ENCODE measurements at regions of chr1 and their contacts with region 1.

Region 1: DNA sequence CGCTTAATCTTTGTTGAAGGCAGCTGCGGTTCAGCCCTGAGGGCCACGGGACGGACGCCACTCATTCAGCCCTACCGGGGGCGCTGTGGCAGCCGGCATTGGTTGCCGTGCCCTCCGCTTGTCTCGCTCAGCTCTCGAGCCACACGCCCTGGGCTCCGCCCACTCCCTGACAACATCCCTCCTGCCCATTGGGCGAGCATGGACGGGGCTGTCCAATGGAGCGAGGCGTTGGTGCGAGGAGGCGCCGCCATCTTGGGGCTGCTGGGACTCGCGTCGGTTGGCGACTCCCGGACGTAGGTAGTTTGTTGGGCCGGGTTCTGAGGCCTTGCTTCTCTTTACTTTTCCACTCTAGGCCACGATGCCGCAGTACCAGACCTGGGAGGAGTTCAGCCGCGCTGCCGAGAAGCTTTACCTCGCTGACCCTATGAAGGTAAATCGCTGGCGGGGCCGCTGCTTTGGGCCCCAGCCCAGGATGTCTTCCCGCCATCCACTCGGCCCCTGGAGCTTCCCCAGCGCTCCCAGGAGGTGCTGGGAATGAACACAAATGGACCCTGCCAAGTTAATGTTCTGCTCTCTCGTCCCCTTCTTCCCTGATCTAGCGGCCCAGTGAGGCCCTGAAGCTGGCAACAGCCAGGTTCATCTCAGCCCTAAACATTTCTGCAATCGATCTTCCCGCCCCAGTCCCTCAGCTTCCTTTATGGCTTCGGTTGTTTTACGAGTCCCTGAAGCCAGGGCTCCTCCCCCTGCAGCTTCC is at the start of gene SRP9:
- DNase-seq: peak; percentile 99
- ATAC-seq: peak; percentile 97
- H3K4me3 ChIP-seq: peak within 1 kb of the TSS; percentile 71 to 97 (median 92)
- H3K4me3 Mint-ChIP-seq: no peak within 1 kb of the TSS
- H3K27ac ChIP-seq: peak within 1 kb of the TSS; percentile 96 to 98
- H3K27ac Mint-ChIP-seq: no peak within 1 kb of the TSS
- H3K4me1 ChIP-seq: peaks cover 33 to 39% of the 10 kb centered on the region in 2 donors
- H3K4me1 Mint-ChIP-seq: peaks cover 21% of the 10 kb centered on the region
- H3K27me3 ChIP-seq: no peaks in the 10 kb centered on the region
- H3K27me3 Mint-ChIP-seq: no peaks in the 10 kb centered on the region
- CTCF ChIP-seq: peak; percentile 89
- total RNA-seq, gene SRP9: 104 and 117 TPM in 2 replicates

Region 2: GRCh38 chr1:225428068-225428880 is 349.5 kb before region 1 on chr1:
- CTCF ChIA-PET with region 1: interaction called, 3 read pairs
- POLR2A ChIA-PET with region 1: interaction called, 8 read pairs
- intact Hi-C with region 1: loop called (anchors 5 kb)
- DNase-seq: peak; percentile 92
- ATAC-seq: peak; percentile 90
- H3K4me3 ChIP-seq: peak overlapping the region; percentile 74 to 93 (median 91)
- H3K4me3 Mint-ChIP-seq: peak overlapping the region; percentile 85
- H3K27ac ChIP-seq: peak overlapping the region; percentile 78 to 83
- H3K27ac Mint-ChIP-seq: peak overlapping the region; percentile 80
- H3K4me1 ChIP-seq: peaks cover 36 to 41% of the 10 kb centered on the region in 2 donors
- H3K4me1 Mint-ChIP-seq: peaks cover 45% of the 10 kb centered on the region
- H3K27me3 ChIP-seq: no peaks in the 10 kb centered on the region
- H3K27me3 Mint-ChIP-seq: no peaks in the 10 kb centered on the region
- CTCF ChIP-seq: no peak

Region 3: DNA sequence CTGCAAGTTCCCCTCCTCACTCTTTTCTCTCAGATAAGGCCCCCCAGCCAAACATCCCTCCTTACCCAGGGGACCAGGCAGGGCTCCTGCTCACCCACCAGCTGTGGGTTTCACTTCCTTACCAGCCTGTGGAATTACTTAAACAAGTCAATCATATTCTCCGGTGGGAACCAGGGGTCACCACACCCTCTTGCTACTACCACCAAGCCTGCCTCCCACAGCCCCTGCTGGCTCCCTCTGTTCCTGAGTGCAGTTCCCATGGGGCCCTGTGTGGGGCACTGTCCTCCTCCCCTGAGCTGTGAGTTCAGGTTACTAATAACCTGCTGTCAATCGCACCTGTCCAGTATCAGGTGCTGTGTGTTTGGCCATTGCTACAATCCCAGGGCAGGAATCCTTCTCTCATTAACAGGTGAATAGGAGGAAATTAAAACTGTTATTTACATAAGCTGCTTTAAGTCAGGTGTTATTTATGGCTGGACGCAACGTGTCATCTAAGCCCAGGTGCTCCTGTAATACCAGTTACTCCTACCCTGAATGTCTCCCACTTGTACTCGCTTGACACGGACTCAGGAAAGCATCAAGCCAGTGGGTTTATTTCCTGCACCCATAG is 296.8 kb before region 1 on chr1:
- CTCF ChIA-PET with region 1: interaction called, 22 read pairs
- POLR2A ChIA-PET with region 1: interaction called, 13 read pairs
- intact Hi-C with region 1: loop called (anchors 2 kb)
- DNase-seq: peak; percentile 84
- ATAC-seq: peak; percentile 88
- H3K4me3 ChIP-seq: peak overlapping the region in 1 of 5 experiments; percentile 4
- H3K4me3 Mint-ChIP-seq: peak overlapping the region; percentile 67
- H3K27ac ChIP-seq: peak overlapping the region; percentile 17 to 50
- H3K27ac Mint-ChIP-seq: peak overlapping the region; percentile 69
- H3K4me1 ChIP-seq: peaks cover 45 to 53% of the 10 kb centered on the region in 2 donors
- H3K4me1 Mint-ChIP-seq: peaks cover 58% of the 10 kb centered on the region
- H3K27me3 ChIP-seq: no peaks in the 10 kb centered on the region
- H3K27me3 Mint-ChIP-seq: no peaks in the 10 kb centered on the region
- CTCF ChIP-seq: peak; percentile 90

Region 4: GRCh38 chr1:225731491-225731890 is 46.3 kb before region 1 on chr1:
- CTCF ChIA-PET with region 1: no interaction called
- POLR2A ChIA-PET with region 1: no interaction called
- intact Hi-C with region 1: no loop called
- DNase-seq: no peak
- ATAC-seq: no peak
- H3K4me3 ChIP-seq: no peak overlapping the region
- H3K4me3 Mint-ChIP-seq: no peak overlapping the region
- H3K27ac ChIP-seq: no peak overlapping the region
- H3K27ac Mint-ChIP-seq: no peak overlapping the region
- H3K4me1 ChIP-seq: no peaks in the 10 kb centered on the region
- H3K4me1 Mint-ChIP-seq: no peaks in the 10 kb centered on the region
- H3K27me3 ChIP-seq: no peaks in the 10 kb centered on the region
- H3K27me3 Mint-ChIP-seq: peaks cover 8% of the 10 kb centered on the region
- CTCF ChIP-seq: no peak

Region 5: GRCh38 chr1:225845571-225846259 is 68.0 kb after region 1 on chr1:
- CTCF ChIA-PET with region 1: interaction called, 9 read pairs
- POLR2A ChIA-PET with region 1: no interaction called
- intact Hi-C with region 1: loop called (anchors 2 kb)
- DNase-seq: no peak
- ATAC-seq: no peak
- H3K4me3 ChIP-seq: no peak overlapping the region
- H3K4me3 Mint-ChIP-seq: no peak overlapping the region
- H3K27ac ChIP-seq: peak overlapping the region in 1 of 2 donors; percentile 87
- H3K27ac Mint-ChIP-seq: peak overlapping the region; percentile 98
- H3K4me1 ChIP-seq: peaks cover 41 to 47% of the 10 kb centered on the region in 2 donors
- H3K4me1 Mint-ChIP-seq: peaks cover 47% of the 10 kb centered on the region
- H3K27me3 ChIP-seq: no peaks in the 10 kb centered on the region
- H3K27me3 Mint-ChIP-seq: no peaks in the 10 kb centered on the region
- CTCF ChIP-seq: no peak

Region 6: GRCh38 chr1:225911191-225912130 is 133.7 kb after region 1 on chr1:
- CTCF ChIA-PET with region 1: interaction called, 28 read pairs
- POLR2A ChIA-PET with region 1: interaction called, 6 read pairs
- intact Hi-C with region 1: loop called (anchors 1 kb)
- DNase-seq: peak; percentile 80
- ATAC-seq: peak; percentile 85
- H3K4me3 ChIP-seq: no peak overlapping the region
- H3K4me3 Mint-ChIP-seq: no peak overlapping the region
- H3K27ac ChIP-seq: peak overlapping the region in 1 of 2 donors; percentile 29
- H3K27ac Mint-ChIP-seq: peak overlapping the region; percentile 10
- H3K4me1 ChIP-seq: peaks cover 24 to 28% of the 10 kb centered on the region in 2 donors
- H3K4me1 Mint-ChIP-seq: peaks cover 20% of the 10 kb centered on the region
- H3K27me3 ChIP-seq: no peaks in the 10 kb centered on the region
- H3K27me3 Mint-ChIP-seq: no peaks in the 10 kb centered on the region
- CTCF ChIP-seq: peak; percentile 84

Region 7: DNA sequence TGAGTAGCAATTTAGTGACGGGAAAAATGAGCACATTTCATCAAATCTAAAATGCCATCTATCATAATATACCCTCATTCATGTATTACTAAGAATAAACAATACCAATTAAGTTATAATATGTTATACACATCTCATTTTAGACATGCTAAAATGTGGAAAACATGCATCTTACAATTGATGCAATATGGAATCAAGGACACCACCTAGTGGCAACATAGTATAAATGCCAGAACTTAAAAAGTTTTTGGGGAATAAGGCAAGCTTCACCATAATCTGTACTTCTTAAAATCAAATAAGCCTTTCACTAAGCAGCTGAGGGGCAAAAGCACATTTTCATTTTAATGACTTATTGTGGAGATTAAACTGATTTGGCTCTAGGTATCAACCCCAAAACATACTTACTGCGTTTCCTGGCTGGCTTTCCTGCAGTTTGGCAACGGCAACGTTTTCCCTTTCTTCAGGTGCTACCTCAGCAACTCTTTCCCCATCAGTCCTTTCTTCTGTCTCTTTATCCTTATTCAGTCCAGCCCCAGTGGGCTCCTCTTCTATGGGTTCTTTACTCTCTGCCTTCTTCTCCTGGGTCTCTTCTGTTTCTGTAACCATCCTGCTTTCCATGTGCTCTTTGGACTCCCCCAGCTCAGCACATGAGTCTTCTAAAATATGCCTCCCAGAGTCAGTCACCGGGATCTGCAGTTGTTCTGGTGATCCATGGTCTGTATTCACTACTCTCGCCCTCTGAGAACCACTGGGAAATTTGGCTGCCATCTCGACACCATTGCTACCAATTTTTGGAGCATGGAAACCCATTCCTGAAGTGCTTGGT is 209.9 kb after region 1 on chr1:
- CTCF ChIA-PET with region 1: interaction called, 13 read pairs
- POLR2A ChIA-PET with region 1: no interaction called
- intact Hi-C with region 1: no loop called
- DNase-seq: peak; percentile 61
- ATAC-seq: peak; percentile 67
- H3K4me3 ChIP-seq: no peak overlapping the region
- H3K4me3 Mint-ChIP-seq: no peak overlapping the region
- H3K27ac ChIP-seq: no peak overlapping the region
- H3K27ac Mint-ChIP-seq: peak overlapping the region; percentile 37
- H3K4me1 ChIP-seq: peaks cover 0 to 4% of the 10 kb centered on the region in 2 donors
- H3K4me1 Mint-ChIP-seq: peaks cover 25% of the 10 kb centered on the region
- H3K27me3 ChIP-seq: no peaks in the 10 kb centered on the region
- H3K27me3 Mint-ChIP-seq: no peaks in the 10 kb centered on the region
- CTCF ChIP-seq: peak; percentile 87

Region 8: DNA sequence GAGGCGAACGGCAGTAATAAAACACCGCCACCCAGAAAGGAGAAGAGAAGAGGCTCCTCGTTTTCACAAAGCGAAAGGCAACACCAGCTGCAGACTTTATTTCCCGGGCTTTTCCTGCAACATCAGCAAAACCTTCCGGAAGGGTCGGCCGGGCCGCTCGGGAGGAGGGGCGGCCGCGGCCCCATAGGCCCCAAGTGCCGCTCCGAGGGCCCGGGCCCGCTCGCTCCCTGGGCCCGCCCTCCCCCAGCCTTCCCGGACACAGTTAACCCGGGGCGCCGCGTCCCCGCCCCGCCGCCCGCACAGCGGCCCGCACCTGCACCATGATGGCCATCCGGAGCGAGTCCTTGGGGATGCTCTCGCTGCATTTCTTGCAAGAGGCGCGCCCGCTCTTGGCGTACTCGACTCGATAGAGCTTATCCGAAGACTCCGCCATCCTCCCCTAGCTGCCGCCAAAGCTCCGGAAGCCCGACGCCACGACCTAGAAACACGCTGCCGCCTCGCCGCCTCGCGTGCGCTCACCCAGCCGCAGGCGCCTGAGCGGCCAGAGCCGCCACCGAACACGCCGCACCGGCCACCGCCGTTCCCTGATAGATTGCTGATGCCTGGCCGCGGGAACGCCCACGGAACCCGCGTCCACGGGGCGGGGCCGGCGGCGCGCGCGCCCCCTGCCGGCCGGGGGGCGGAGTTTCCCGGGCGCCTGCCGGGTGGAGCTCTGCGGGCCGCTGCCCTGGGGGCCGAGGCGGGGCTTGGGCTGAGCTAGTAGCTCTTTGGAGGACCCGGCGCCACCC is 629.9 kb after region 1 on chr1 and contains the start of gene PARP1:
- CTCF ChIA-PET with region 1: interaction called, 4 read pairs
- POLR2A ChIA-PET with region 1: no interaction called
- intact Hi-C with region 1: loop called (anchors 5 kb)
- DNase-seq: peak; percentile 94
- ATAC-seq: peak; percentile 83
- H3K4me3 ChIP-seq: peak within 1 kb of the TSS; percentile 81 to 95 (median 83)
- H3K4me3 Mint-ChIP-seq: peak within 1 kb of the TSS; percentile 91
- H3K27ac ChIP-seq: peak within 1 kb of the TSS; percentile 78 to 88
- H3K27ac Mint-ChIP-seq: peak within 1 kb of the TSS; percentile 93
- H3K4me1 ChIP-seq: peaks cover 45 to 46% of the 10 kb centered on the region in 2 donors
- H3K4me1 Mint-ChIP-seq: peaks cover 43% of the 10 kb centered on the region
- H3K27me3 ChIP-seq: no peaks in the 10 kb centered on the region
- H3K27me3 Mint-ChIP-seq: no peaks in the 10 kb centered on the region
- CTCF ChIP-seq: peak; percentile 88
- total RNA-seq, gene PARP1: 180 and 187 TPM in 2 replicates

Measured in B cell (primary cell).